HCT116 (cell line): ENCODE measurements at regions of chr20 and their contacts with region 1.

Region 1: GRCh38 chr20:35318502-35319157 is 26.4 kb upstream of the FAM83C start:
- DNase-seq: peak; percentile 89
- ATAC-seq: peak; percentile 84
- H3K4me3 ChIP-seq: peak overlapping the region in 1 of 2 experiments; percentile 8; a peak in 3 of 4 replicates
- H3K27ac ChIP-seq: peak overlapping the region; percentile 69
- H3K4me1 ChIP-seq: peaks cover 55 to 85% of the 10 kb centered on the region in 2 experiments
- H3K27me3 ChIP-seq: no peaks in the 10 kb centered on the region
- CTCF ChIP-seq: no peak
- POLR2A ChIP-seq: no peak
- RAD21 ChIP-seq: no peak

Region 2: DNA sequence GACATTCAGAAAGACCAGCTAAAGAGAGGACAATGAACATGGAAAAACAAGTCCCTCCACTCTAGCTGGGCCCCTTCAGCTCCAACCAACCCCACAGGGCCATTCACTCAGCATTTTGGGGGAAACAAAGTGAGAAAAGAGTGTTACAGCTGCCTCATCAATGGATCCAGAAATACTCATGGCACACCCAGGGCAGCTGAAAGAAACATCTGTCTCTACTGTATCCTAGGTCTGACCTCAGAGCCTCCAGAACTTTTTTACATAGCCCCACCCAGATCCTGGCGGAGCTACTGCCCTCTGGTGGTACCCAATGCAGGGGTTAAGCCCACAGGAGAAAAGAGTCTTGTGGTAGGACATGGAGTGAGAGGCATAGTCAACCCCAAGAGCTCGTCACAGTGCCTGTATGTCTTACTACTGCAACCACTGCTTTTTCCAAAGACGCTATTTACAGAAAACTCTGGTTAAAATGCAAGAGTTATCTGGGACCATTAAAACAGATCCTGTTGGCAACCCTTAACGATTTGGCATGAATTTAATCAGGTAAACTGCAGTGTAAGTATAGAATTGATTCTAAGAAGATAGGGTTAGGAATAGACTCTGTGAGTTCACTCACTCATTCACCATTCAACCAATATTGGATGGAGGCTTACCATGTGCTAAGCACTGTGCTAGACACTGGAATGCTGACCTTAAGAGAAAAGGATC is 11.0 kb after region 1 on chr20:
- CTCF ChIA-PET with region 1: interaction called, 24 read pairs
- POLR2A ChIA-PET with region 1: interaction called, 5 read pairs
- RAD21 ChIA-PET with region 1: interaction called in 1 of 2 experiments, 3 read pairs
- intact Hi-C with region 1: no loop called
- DNase-seq: no peak
- ATAC-seq: peak; percentile 83
- H3K4me3 ChIP-seq: no peak overlapping the region
- H3K27ac ChIP-seq: no peak overlapping the region
- H3K4me1 ChIP-seq: peaks cover 47 to 59% of the 10 kb centered on the region in 2 experiments
- H3K27me3 ChIP-seq: no peaks in the 10 kb centered on the region
- CTCF ChIP-seq: peak; percentile 83 to 98 (median 90)
- POLR2A ChIP-seq: no peak
- RAD21 ChIP-seq: peak; percentile 80

Region 3: DNA sequence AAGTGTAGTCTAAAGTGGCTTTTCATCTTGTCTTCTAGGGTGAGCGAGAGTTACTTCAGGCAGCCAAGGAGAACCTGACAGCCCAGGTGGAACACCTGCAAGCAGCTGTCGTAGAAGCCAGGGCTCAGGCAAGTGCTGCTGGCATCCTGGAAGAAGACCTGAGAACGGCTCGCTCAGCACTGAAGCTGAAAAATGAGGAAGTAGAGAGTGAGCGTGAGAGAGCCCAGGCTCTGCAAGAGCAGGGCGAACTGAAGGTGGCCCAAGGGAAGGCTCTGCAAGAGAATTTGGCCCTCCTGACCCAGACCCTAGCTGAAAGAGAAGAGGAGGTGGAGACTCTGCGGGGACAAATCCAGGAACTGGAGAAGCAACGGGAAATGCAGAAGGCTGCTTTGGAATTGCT is 183.7 kb after region 1 on chr20:
- CTCF ChIA-PET with region 1: no interaction called
- POLR2A ChIA-PET with region 1: no interaction called
- RAD21 ChIA-PET with region 1: no interaction called
- intact Hi-C with region 1: no loop called
- DNase-seq: no peak
- ATAC-seq: no peak
- H3K4me3 ChIP-seq: no peak overlapping the region
- H3K27ac ChIP-seq: no peak overlapping the region
- H3K4me1 ChIP-seq: peaks cover 0 to 14% of the 10 kb centered on the region in 2 experiments; a peak in 2 of 4 replicates
- H3K27me3 ChIP-seq: no peaks in the 10 kb centered on the region
- CTCF ChIP-seq: no peak
- POLR2A ChIP-seq: no peak
- RAD21 ChIP-seq: no peak